ENCODE measurements at regions of chr10 and their contacts with region 1.

Region 1: DNA sequence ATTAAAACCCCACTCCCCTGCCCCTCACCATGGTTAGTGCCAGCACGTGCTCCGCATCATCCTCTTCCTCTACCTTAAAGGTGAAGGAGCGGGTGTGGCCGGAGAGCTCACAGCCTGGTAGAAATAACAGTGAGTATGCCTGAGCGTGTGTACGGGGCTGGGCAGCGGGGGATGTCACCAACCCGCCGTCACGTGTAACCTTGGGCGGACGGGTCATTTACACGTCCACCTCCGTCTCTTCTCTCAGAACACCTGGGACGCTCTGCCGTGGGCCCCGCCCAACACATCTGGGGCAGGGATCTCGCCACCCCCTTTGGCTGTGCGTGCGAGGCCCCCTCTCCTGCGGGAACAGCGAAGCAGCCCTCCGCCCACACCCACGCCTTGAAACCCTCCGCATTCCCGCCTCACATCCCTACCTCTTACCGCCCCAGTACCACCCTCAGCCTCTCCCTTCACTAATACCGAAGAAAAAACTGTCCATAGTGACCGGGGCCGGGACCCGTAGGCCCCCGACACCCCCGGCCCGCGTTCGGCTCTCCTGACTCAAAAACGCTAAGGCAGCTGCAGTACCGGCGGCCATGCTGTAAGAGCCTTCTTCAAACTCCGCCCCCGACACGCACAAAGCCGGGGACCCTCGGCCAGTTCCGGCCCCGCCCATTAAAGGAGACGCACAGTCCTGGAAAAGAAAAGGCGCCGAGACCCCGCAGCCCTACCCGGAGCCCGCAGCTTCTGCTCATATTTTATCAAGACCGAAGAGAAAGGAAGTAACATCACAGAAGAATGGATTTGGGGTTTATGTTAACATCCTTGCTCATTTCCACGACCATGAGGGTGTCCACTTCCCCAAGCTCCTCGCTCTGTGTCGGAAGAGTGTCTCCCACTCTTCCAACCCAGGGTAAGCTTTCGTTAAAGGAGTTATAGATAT is at the start of gene NPM3:
- DNase-seq: peak; percentile 86 to 90
- ATAC-seq: peak; percentile 57
- total RNA-seq, gene NPM3: 17.9 to 22.1 TPM

Region 2: DNA sequence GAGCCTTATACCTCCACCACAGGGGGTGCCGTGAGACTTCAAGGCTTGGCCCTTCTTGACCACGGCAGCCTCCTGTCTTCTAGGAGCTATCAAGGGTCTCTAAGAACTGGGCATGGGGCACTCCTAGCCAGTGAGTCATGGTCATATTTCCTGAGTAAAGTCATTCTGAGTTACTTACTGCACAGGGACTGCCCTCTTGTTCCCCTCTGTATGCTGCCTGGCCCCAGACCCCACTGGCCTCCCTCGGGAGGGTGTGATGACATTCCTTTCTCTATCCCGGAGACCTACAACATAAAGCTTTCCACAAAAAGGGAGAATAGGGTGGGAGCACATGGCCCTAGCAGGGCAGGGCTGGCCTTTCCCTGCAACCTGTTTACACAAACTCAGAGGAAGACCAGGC is 173.6 kb before region 1 on chr10:
- intact Hi-C with region 1: loop called in 1 of 2 experiments (anchors 5 kb)
- DNase-seq: no peak
- ATAC-seq: no peak

Region 3: GRCh38 chr10:101709359-101710058 is 73.6 kb before region 1 on chr10:
- intact Hi-C with region 1: loop called in 1 of 2 experiments (anchors 5 kb)
- DNase-seq: no peak
- ATAC-seq: no peak

Region 4: GRCh38 chr10:101720611-101721230 is 62.4 kb before region 1 on chr10:
- intact Hi-C with region 1: no loop called
- DNase-seq: no peak
- ATAC-seq: no peak

Measured in left colon (tissue), 2 donors.